ENCODE measurements at regions of chr5 and their contacts with region 1.

Region 1: GRCh38 chr5:62112689-62113228 is 193.2 kb upstream of the KIF2A start:
- DNase-seq: no peak
- ATAC-seq: no peak
- H3K4me3 ChIP-seq: no peak overlapping the region
- H3K4me3 Mint-ChIP-seq: no peak overlapping the region
- H3K27ac ChIP-seq: no peak overlapping the region
- H3K27ac Mint-ChIP-seq: no peak overlapping the region
- H3K4me1 ChIP-seq: no peaks in the 10 kb centered on the region
- H3K4me1 Mint-ChIP-seq: no peaks in the 10 kb centered on the region
- H3K27me3 ChIP-seq: no peaks in the 10 kb centered on the region
- H3K27me3 Mint-ChIP-seq: peaks cover 3% of the 10 kb centered on the region
- CTCF ChIP-seq: no peak

Region 2: GRCh38 chr5:60789546-60789945 is 1323.2 kb before region 1 on chr5:
- CTCF ChIA-PET with region 1: no interaction called
- POLR2A ChIA-PET with region 1: no interaction called
- intact Hi-C with region 1: no loop called
- DNase-seq: no peak
- ATAC-seq: no peak
- H3K4me3 ChIP-seq: no peak overlapping the region
- H3K4me3 Mint-ChIP-seq: no peak overlapping the region
- H3K27ac ChIP-seq: no peak overlapping the region
- H3K27ac Mint-ChIP-seq: no peak overlapping the region
- H3K4me1 ChIP-seq: no peaks in the 10 kb centered on the region
- H3K4me1 Mint-ChIP-seq: no peaks in the 10 kb centered on the region
- H3K27me3 ChIP-seq: no peaks in the 10 kb centered on the region
- H3K27me3 Mint-ChIP-seq: peaks cover 9% of the 10 kb centered on the region
- CTCF ChIP-seq: no peak

Region 3: GRCh38 chr5:62038024-62038423 is 74.7 kb before region 1 on chr5:
- CTCF ChIA-PET with region 1: no interaction called
- POLR2A ChIA-PET with region 1: no interaction called
- intact Hi-C with region 1: loop called in 1 of 2 experiments (anchors 2 kb)
- DNase-seq: no peak
- ATAC-seq: no peak
- H3K4me3 ChIP-seq: no peak overlapping the region
- H3K4me3 Mint-ChIP-seq: no peak overlapping the region
- H3K27ac ChIP-seq: no peak overlapping the region
- H3K27ac Mint-ChIP-seq: no peak overlapping the region
- H3K4me1 ChIP-seq: no peaks in the 10 kb centered on the region
- H3K4me1 Mint-ChIP-seq: no peaks in the 10 kb centered on the region
- H3K27me3 ChIP-seq: no peaks in the 10 kb centered on the region
- H3K27me3 Mint-ChIP-seq: peaks cover 2% of the 10 kb centered on the region
- CTCF ChIP-seq: no peak

Region 4: DNA sequence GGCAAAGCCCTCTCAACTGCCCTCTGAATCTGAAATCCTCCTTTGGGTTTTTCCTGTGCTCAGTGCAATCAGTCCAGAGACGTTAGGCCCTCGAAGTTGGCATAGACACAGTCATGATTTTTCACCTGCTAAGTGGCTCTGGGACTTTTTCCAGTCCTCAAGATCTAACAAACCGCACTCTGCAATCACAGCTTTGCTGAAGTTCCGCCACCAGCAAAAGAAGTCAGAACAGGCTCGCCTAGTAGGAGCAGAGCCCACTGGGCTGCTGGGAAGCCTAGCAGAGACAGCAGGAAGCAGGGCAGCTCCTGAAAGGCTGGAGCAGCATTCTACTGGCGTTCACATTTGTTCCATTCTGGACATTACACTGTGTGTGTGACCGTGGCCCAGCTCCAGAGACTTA is 29.5 kb before region 1 on chr5:
- CTCF ChIA-PET with region 1: no interaction called
- POLR2A ChIA-PET with region 1: no interaction called
- intact Hi-C with region 1: no loop called
- DNase-seq: no peak
- ATAC-seq: no peak
- H3K4me3 ChIP-seq: no peak overlapping the region
- H3K4me3 Mint-ChIP-seq: no peak overlapping the region
- H3K27ac ChIP-seq: no peak overlapping the region
- H3K27ac Mint-ChIP-seq: no peak overlapping the region
- H3K4me1 ChIP-seq: no peaks in the 10 kb centered on the region
- H3K4me1 Mint-ChIP-seq: no peaks in the 10 kb centered on the region
- H3K27me3 ChIP-seq: no peaks in the 10 kb centered on the region
- H3K27me3 Mint-ChIP-seq: no peaks in the 10 kb centered on the region
- CTCF ChIP-seq: no peak

Region 5: GRCh38 chr5:62155988-62156387 is 43.2 kb after region 1 on chr5:
- CTCF ChIA-PET with region 1: no interaction called
- POLR2A ChIA-PET with region 1: no interaction called
- intact Hi-C with region 1: no loop called
- DNase-seq: no peak
- ATAC-seq: no peak
- H3K4me3 ChIP-seq: no peak overlapping the region
- H3K4me3 Mint-ChIP-seq: no peak overlapping the region
- H3K27ac ChIP-seq: no peak overlapping the region
- H3K27ac Mint-ChIP-seq: no peak overlapping the region
- H3K4me1 ChIP-seq: no peaks in the 10 kb centered on the region
- H3K4me1 Mint-ChIP-seq: no peaks in the 10 kb centered on the region
- H3K27me3 ChIP-seq: no peaks in the 10 kb centered on the region
- H3K27me3 Mint-ChIP-seq: peaks cover 20% of the 10 kb centered on the region
- CTCF ChIP-seq: no peak

Measured in CD8-positive, alpha-beta T cell (primary cell).